ENCODE measurements at regions of chr14 and their contacts with region 1.

Region 1: DNA sequence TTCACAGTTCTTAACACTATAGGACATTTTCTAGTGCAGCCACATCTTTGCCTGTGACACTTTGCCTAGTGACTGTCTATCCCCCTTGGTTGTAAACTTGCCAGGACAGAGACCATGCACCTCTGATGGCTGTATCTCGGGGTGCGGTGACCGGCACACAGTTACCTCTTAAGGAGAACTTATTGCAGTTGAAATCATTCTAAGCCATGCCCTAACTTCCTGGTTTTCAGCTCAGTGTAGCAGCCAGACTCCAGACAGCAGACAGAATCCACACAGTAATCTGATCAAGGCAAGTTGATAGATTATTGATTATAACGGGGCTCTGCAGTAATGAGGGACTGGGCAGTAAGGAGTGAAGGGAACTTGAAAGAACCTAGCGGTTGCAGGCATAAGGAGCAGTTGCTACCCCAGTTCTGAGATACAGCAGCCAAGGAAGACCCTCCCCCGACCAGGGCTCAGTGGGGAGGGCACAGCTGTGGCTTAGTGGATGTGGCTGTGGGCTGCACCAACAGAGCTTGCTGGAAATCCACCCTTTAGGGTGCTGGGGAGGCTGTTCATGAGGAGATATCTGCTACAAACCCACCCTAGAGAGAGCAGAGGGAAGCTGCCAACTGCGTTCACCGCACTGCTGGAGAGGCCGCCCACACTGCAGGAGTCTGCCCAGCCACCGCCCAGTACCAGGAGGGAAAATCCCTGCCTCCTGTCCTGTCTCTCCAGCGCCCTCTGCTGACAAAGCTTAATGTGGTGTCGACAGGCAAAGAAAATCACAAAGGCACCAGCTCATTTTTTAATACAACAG is 58.2 kb upstream of the BEGAIN start:
- DNase-seq: peak; percentile 70
- H3K4me3 ChIP-seq: no peak overlapping the region
- H3K27ac ChIP-seq: no peak overlapping the region
- H3K4me1 ChIP-seq: peaks cover 4% of the 10 kb centered on the region
- H3K27me3 ChIP-seq: no peaks in the 10 kb centered on the region
- CTCF ChIP-seq: peak; percentile 74 to 83

Region 2: DNA sequence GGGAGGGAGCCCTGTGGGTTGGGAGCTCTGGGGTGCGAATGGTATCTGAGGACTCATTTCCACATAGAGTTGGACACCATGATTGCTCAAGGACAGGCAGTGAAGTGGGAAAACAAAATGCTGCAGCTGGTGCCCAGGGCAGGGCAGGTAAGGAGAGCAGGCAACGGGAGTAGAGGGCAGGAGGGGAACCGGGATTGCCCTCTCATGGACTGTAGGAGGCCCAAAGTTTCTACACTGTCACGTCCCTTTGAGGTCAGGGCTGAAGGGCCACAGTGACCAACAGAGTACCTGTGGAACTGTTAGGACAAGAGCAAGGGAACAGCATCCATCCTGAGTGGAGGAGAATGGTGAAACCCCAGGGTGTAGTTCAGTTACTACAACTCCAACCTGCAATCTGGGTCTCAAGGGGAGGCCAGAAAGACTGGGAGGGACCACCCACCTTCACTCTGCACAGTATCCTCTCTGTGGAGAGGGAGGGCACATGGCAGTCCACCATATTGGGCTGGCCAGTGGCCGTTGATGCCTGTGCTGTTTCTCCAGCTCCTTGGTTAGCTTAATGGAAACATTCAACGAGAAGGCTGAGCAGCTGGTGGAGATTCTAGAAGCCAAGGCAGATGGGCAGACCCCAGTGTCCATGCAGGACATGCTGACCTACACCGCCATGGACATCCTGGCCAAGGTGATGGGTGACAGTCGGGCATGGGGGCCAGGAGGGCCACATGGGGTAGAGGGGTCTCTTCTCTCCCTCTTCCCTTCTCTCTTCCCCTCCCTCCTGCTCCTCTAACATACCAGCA is 939.1 kb before region 1 on chr14:
- CTCF ChIA-PET with region 1: no interaction called
- dilution Hi-C with region 1: no loop called
- in situ Hi-C with region 1: no loop called
- intact Hi-C with region 1: no loop called
- DNase-seq: no peak
- H3K4me3 ChIP-seq: no peak overlapping the region
- H3K27ac ChIP-seq: no peak overlapping the region
- H3K4me1 ChIP-seq: no peaks in the 10 kb centered on the region
- H3K27me3 ChIP-seq: no peaks in the 10 kb centered on the region
- CTCF ChIP-seq: no peak

Region 3: DNA sequence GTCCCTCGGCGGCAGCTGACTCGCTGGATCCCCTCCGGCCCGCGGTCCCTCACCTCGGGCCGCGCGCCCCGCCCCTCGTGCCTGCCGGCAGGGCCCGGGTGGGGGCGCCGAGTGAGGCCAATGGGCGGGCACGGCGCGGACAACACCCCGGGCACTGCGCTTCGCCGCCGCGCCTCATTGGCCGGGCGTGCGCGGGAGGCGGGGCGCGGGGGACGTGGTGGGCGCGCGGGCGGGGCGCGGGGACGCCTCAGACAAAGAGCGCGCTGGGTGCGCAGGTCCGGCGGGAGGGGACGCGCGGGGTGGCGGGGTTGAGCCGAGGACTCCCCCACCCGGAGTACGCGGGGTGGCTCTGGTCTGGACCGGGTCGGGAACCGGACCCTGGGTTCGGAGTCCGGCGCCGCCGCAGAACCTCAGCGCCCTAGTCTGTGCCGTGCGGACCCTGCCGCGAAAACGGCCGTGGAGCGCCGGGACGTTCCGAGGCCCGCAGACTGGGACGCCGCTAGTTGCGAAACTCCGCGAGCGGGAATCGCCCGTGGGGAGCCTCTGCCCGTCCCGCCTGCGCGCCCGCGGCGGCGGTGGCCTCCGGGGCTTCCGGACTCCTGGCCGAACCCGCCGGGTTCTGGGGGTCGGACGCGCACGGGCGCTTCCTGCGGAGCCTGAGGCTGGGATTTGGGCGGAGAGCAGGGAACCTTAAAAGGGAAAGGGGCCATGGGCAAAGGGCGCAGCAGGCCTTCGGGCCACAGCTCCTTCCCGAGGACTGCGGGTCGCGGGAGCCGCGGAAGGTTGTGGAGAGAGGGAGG is 338.8 kb before region 1 on chr14 and contains the start of gene SLC25A29:
- CTCF ChIA-PET with region 1: no interaction called
- dilution Hi-C with region 1: no loop called
- in situ Hi-C with region 1: no loop called
- intact Hi-C with region 1: loop called (anchors 10 kb)
- DNase-seq: peak; percentile 78
- H3K4me3 ChIP-seq: peak within 1 kb of the TSS; percentile 66 to 76 (median 69)
- H3K27ac ChIP-seq: no peak within 1 kb of the TSS
- H3K4me1 ChIP-seq: peaks cover 26% of the 10 kb centered on the region
- H3K27me3 ChIP-seq: no peaks in the 10 kb centered on the region
- CTCF ChIP-seq: no peak
- total RNA-seq, gene SLC25A29: 8.0 to 29.7 TPM

Region 4: GRCh38 chr14:100417466-100417865 is 227.9 kb before region 1 on chr14:
- CTCF ChIA-PET with region 1: interaction called, 9 read pairs
- dilution Hi-C with region 1: no loop called
- in situ Hi-C with region 1: no loop called
- intact Hi-C with region 1: loop called (anchors 1 kb)
- DNase-seq: peak; percentile 84
- H3K4me3 ChIP-seq: no peak overlapping the region
- H3K27ac ChIP-seq: peak overlapping the region; percentile 60
- H3K4me1 ChIP-seq: peaks cover 16% of the 10 kb centered on the region
- H3K27me3 ChIP-seq: no peaks in the 10 kb centered on the region
- CTCF ChIP-seq: peak; percentile 88 to 89

Region 5: DNA sequence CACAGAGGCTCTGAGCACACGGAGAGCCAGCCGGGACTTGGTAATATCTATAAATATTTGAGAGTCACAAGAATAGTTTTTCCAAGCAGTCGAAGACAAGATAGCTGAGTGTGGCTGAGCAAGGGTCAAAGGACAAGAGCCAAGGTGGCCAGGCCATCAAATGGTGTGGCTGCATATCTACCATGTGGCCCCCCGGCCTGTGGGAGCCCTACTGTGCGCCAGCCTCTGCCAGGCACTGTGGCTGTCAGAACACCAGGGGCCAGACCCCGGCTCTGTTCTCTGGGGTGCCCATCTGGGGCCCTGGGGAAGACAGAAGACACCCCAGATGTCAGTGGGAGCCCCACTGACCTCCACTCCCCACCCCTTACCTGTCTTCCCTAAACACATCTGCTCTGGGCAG is 80.9 kb before region 1 on chr14:
- CTCF ChIA-PET with region 1: no interaction called
- dilution Hi-C with region 1: loop called (anchors 5 kb)
- in situ Hi-C with region 1: no loop called
- intact Hi-C with region 1: no loop called
- DNase-seq: no peak
- H3K4me3 ChIP-seq: no peak overlapping the region
- H3K27ac ChIP-seq: no peak overlapping the region
- H3K4me1 ChIP-seq: no peaks in the 10 kb centered on the region
- H3K27me3 ChIP-seq: peaks cover 25% of the 10 kb centered on the region
- CTCF ChIP-seq: no peak

Region 6: DNA sequence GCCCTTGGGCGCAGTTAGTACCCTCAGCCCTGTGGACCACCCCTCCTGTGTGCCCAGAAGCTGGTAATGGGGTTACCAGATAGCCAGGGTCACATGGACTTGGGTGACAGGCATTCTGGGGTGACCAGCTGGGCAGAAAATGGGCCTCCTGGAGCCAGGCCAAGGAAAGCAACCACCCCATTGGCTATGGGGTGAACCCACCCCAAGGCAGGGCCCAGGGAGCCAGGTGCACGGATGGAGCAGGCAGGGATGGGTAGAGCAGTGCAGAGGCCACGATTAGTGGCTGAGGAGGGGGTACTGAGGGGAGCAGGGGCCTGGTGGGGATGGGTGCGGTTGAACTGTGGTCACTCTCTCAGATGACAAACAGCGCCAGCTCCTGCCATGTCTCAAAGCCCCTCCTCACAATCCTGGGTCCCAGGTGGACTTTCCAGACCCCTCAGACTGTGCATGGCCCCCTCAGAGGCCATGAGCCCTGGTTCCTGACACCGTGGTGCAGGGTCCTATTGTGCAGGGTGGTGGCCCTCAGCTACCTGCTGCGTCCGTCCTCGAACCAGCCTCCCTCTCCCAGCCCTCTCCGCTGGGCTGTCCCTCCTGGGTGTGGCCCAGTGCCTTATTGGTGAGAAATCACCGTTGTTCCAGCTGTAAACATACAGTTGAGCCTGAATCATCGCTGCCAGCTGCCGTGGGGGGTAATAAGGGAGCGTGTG is 34.7 kb before region 1 on chr14:
- CTCF ChIA-PET with region 1: no interaction called
- dilution Hi-C with region 1: loop called (anchors 5 kb)
- in situ Hi-C with region 1: no loop called
- intact Hi-C with region 1: no loop called
- DNase-seq: no peak
- H3K4me3 ChIP-seq: no peak overlapping the region
- H3K27ac ChIP-seq: no peak overlapping the region
- H3K4me1 ChIP-seq: peaks cover 4% of the 10 kb centered on the region
- H3K27me3 ChIP-seq: peaks cover 3% of the 10 kb centered on the region
- CTCF ChIP-seq: no peak

Region 7: GRCh38 chr14:100692859-100693558 is 47.6 kb after region 1 on chr14:
- CTCF ChIA-PET with region 1: no interaction called
- dilution Hi-C with region 1: no loop called
- in situ Hi-C with region 1: no loop called
- intact Hi-C with region 1: no loop called
- DNase-seq: peak; percentile 98
- H3K4me3 ChIP-seq: peak overlapping the region in 1 of 3 experiments; percentile 41
- H3K27ac ChIP-seq: peak overlapping the region; percentile 72
- H3K4me1 ChIP-seq: peaks cover 45% of the 10 kb centered on the region
- H3K27me3 ChIP-seq: no peaks in the 10 kb centered on the region
- CTCF ChIP-seq: no peak